PC-3 (cell line): ENCODE measurements at regions of chr11 and their contacts with region 1.

Region 1: GRCh38 chr11:94767761-94768601 is at the start of gene AMOTL1:
- DNase-seq: peak; percentile 96
- ATAC-seq: peak; percentile 78
- H3K4me3 ChIP-seq: peak within 1 kb of the TSS; percentile 94
- H3K27ac ChIP-seq: peak within 1 kb of the TSS; percentile 61
- H3K4me1 ChIP-seq: peaks cover 46% of the 10 kb centered on the region
- H3K27me3 ChIP-seq: no peaks in the 10 kb centered on the region
- CTCF ChIP-seq: peak; percentile 41
- total RNA-seq, gene AMOTL1: 32.6 and 37.9 TPM in 2 replicates

Region 2: GRCh38 chr11:94513091-94513490 is 254.9 kb before region 1 on chr11:
- CTCF ChIA-PET with region 1: no interaction called
- POLR2A ChIA-PET with region 1: no interaction called
- intact Hi-C with region 1: no loop called
- DNase-seq: peak; percentile 75
- ATAC-seq: peak; percentile 37
- H3K4me3 ChIP-seq: peak overlapping the region; percentile 83
- H3K27ac ChIP-seq: no peak overlapping the region
- H3K4me1 ChIP-seq: peaks cover 16% of the 10 kb centered on the region
- H3K27me3 ChIP-seq: no peaks in the 10 kb centered on the region
- CTCF ChIP-seq: no peak

Region 3: DNA sequence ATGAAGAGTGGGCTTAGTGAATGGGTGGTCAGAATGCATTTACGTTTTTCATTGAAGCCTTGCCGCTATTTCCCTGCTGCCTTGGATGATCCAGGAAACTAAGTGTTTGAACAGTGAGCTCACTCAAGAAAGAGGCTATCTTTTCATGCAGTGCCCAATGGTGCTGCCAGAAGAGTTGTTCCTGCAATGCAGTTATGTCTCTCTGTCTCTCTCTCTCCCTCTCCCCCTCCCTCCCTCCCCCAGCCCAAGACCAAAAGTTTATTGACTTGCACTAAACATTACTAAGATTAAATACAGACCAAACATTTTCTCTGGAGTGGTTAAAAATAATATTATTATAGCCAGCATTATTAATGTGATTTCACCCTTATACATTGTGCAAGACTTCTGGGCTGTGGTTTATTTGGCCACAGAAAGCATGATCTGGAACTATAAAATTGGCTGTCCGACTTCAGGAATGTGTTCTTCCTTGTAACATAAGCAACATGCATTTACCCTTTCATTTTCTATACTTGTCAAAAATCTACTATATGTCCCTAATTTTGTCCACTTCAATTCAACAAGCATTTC is 230.9 kb before region 1 on chr11:
- CTCF ChIA-PET with region 1: no interaction called
- POLR2A ChIA-PET with region 1: no interaction called
- intact Hi-C with region 1: loop called (anchors 10 kb)
- DNase-seq: peak; percentile 67
- ATAC-seq: peak; percentile 85
- H3K4me3 ChIP-seq: peak overlapping the region; percentile 13; the same call in 1 of the 2 replicates
- H3K27ac ChIP-seq: peak overlapping the region; percentile 22; the same call in 1 of the 2 replicates
- H3K4me1 ChIP-seq: peaks cover 26% of the 10 kb centered on the region
- H3K27me3 ChIP-seq: no peaks in the 10 kb centered on the region
- CTCF ChIP-seq: no peak

Region 4: GRCh38 chr11:94741022-94741679 is 26.8 kb before region 1 on chr11:
- CTCF ChIA-PET with region 1: no interaction called
- POLR2A ChIA-PET with region 1: interaction called, 3 read pairs
- intact Hi-C with region 1: loop called (anchors 2 kb)
- DNase-seq: peak; percentile 87
- ATAC-seq: peak; percentile 46
- H3K4me3 ChIP-seq: peak overlapping the region; percentile 76
- H3K27ac ChIP-seq: peak overlapping the region; percentile 6; the same call in 1 of the 2 replicates
- H3K4me1 ChIP-seq: peaks cover 51% of the 10 kb centered on the region
- H3K27me3 ChIP-seq: no peaks in the 10 kb centered on the region
- CTCF ChIP-seq: peak; percentile 65

Region 5: GRCh38 chr11:94781837-94782236 is 13.9 kb after region 1 on chr11:
- CTCF ChIA-PET with region 1: no interaction called
- POLR2A ChIA-PET with region 1: no interaction called
- intact Hi-C with region 1: no loop called
- DNase-seq: no peak
- ATAC-seq: no peak
- H3K4me3 ChIP-seq: no peak overlapping the region
- H3K27ac ChIP-seq: no peak overlapping the region
- H3K4me1 ChIP-seq: peaks cover 9% of the 10 kb centered on the region
- H3K27me3 ChIP-seq: no peaks in the 10 kb centered on the region
- CTCF ChIP-seq: no peak

Region 6: DNA sequence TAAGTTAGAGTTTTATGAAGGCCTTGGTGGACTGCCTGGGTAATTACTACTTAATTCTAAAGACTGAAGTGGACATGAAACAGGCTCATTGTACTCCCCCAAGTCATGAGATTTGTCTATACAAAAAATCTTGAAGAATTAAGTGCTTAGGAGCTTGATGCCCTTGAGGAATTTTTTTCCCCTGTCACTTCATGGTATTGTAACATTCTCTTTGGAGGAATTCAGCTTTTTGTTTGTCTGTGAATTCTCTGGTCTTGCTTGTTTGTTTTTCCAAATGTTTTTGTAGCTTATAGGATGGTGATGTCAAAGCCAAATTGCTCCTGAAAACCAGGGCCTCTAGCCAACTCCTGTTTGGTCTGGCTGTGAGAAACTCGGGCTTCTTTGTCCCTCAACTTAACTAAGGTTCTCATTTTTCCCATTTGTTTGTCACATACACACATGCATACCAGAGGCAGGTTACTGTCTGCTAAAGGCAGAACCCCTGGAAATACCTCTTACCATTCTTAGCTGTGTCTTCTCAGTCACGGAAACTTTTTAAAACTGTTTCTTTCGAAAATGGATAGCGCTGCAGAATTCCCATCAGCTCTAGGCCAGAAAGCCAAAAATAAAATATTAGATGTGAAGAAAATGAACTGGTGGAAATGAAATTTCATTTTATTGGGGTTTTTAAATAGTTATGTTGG is 67.1 kb after region 1 on chr11:
- CTCF ChIA-PET with region 1: no interaction called
- POLR2A ChIA-PET with region 1: no interaction called
- intact Hi-C with region 1: loop called (anchors 5 kb)
- DNase-seq: no peak
- ATAC-seq: no peak
- H3K4me3 ChIP-seq: no peak overlapping the region
- H3K27ac ChIP-seq: no peak overlapping the region
- H3K4me1 ChIP-seq: peaks cover 45% of the 10 kb centered on the region
- H3K27me3 ChIP-seq: no peaks in the 10 kb centered on the region
- CTCF ChIP-seq: no peak

Region 7: GRCh38 chr11:94876645-94877442 is 108.9 kb after region 1 on chr11:
- CTCF ChIA-PET with region 1: no interaction called
- POLR2A ChIA-PET with region 1: no interaction called
- intact Hi-C with region 1: loop called (anchors 1 kb)
- DNase-seq: peak; percentile 84
- ATAC-seq: peak; percentile 79
- H3K4me3 ChIP-seq: no peak overlapping the region
- H3K27ac ChIP-seq: peak overlapping the region; percentile 22
- H3K4me1 ChIP-seq: peaks cover 44% of the 10 kb centered on the region
- H3K27me3 ChIP-seq: no peaks in the 10 kb centered on the region
- CTCF ChIP-seq: peak; percentile 58

Region 8: GRCh38 chr11:94973099-94973968 is 205.4 kb after region 1 on chr11 and contains the starts of genes CWC15 and KDM4D:
- CTCF ChIA-PET with region 1: interaction called, 3 read pairs
- POLR2A ChIA-PET with region 1: no interaction called
- intact Hi-C with region 1: loop called (anchors 5 kb)
- DNase-seq: peak; percentile 98
- ATAC-seq: peak; percentile 99
- H3K4me3 ChIP-seq: peak within 1 kb of the TSS; percentile 83
- H3K27ac ChIP-seq: peak within 1 kb of the TSS; percentile 13; the same call in 1 of the 2 replicates
- H3K4me1 ChIP-seq: peaks cover 21% of the 10 kb centered on the region
- H3K27me3 ChIP-seq: no peaks in the 10 kb centered on the region
- CTCF ChIP-seq: no peak
- total RNA-seq, gene CWC15: 56.9 and 63.5 TPM in 2 replicates
- total RNA-seq, gene KDM4D: 2.7 and 4.1 TPM in 2 replicates